Ascending aorta (tissue), 2 donors: ENCODE measurements at regions of chr1 and their contacts with region 1.

Region 1: GRCh38 chr1:183234660-183235476 is 48.8 kb downstream of the LAMC2 start:
- DNase-seq: peak; percentile 45 to 88
- H3K4me3 ChIP-seq: peak overlapping the region; percentile 60 to 62
- H3K27ac ChIP-seq: peak overlapping the region; percentile 77
- H3K4me1 ChIP-seq: peaks cover 0 to 11% of the 10 kb centered on the region in 2 donors
- H3K27me3 ChIP-seq: no peaks in the 10 kb centered on the region
- CTCF ChIP-seq: peak in 2 of 3 experiments; percentile 65 to 71

Region 2: DNA sequence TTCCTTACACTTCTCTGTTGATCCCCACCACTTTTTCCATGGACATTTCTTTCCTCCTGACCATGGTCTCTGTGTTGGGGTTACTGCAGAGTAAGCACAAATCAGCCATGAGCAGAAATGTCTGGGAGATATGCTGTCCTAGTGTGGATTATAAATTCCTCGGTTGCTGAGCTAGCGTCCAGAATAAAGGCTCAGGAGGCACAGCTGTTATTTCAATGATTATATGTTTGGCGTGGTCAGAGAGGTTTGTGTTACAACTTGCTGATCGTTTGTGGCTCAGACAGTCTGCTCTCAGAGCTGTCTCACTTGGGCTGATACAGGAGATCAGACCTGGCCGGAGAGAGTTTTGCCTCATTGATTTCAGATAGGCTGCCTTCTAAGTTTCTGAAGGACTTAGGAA is 86.3 kb before region 1 on chr1:
- intact Hi-C with region 1: loop called (anchors 5 kb)
- DNase-seq: no peak
- H3K4me3 ChIP-seq: peak overlapping the region in 1 of 2 donors; percentile 4
- H3K27ac ChIP-seq: peak overlapping the region; percentile 35 to 59
- H3K4me1 ChIP-seq: peaks cover 0 to 13% of the 10 kb centered on the region in 2 donors
- H3K27me3 ChIP-seq: no peaks in the 10 kb centered on the region
- CTCF ChIP-seq: no peak

Region 3: DNA sequence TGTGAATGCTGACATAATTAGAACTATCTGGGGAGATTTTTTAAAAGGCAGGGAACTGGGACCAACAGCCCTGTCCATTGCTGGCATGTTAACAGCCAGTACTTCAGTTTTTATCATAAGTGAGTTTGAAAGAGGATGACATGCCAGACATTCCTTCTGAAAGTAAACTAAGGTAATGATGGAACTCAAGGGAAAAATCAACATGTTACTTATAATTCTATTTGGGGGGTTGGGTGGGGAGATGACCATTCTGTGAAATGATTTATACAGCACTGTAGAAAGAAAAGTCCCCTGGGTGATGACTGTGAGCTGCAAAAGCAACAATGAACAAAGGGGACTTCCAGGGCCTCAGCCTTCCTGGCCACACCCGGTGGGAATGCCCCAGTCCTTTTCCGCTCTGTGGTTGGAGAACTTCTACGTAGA is 54.2 kb before region 1 on chr1:
- intact Hi-C with region 1: loop called (anchors 2 kb)
- DNase-seq: peak in 1 of 2 donors; percentile 77
- H3K4me3 ChIP-seq: peak overlapping the region in 1 of 2 donors; percentile 1
- H3K27ac ChIP-seq: peak overlapping the region; percentile 59 to 66
- H3K4me1 ChIP-seq: peaks cover 3 to 12% of the 10 kb centered on the region in 2 donors
- H3K27me3 ChIP-seq: no peaks in the 10 kb centered on the region
- CTCF ChIP-seq: no peak